ENCODE measurements at regions of chr3 and their contacts with region 1.

Region 1: DNA sequence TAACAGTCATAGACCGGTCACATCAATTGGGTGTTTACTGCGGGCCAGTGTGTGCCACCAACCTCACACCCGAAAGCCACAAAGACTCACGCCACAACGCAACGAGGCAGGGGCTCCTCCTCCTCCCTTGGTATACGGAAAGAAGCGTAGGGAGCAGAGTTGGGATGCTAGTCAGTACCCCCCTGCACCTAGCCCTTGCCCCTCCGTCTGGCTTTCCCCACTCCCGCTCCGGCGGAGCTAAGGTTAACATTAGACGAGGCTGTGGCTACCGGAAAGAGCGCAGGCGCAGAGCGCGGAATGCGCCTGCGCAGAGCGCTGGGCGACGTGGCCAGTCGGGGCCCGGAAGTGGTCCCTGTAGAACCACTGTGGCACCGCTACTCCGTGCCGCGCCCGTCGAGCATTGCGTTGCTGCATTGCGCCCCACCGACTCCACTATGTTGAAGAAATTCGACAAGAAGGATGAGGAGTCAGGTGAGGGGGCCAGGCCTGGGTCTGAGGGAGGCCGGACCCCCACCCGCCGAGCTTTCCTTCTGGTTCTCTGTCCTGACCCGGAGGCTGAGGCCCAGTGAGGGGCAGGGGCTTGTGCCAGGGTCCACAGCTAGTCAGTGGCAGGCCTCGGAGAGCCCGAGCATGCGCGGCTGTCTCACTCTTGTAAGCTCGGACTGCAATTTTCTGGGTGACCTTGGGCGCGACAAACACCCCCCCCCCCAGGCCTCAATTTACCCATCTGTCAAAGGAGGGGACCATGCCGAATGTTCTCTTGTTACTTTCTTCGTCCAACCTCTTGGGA is at the start of gene COPG1:
- DNase-seq: peak; percentile 88 to 94
- ATAC-seq: peak; percentile 90 to 95 (median 92)
- H3K4me3 ChIP-seq: peak within 1 kb of the TSS; percentile 80
- H3K27ac ChIP-seq: peak within 1 kb of the TSS; percentile 87
- H3K4me1 ChIP-seq: peaks cover 31% of the 10 kb centered on the region
- H3K27me3 ChIP-seq: no peaks in the 10 kb centered on the region
- CTCF ChIP-seq: no peak
- total RNA-seq, gene COPG1: 59.7 to 85.6 (median 65.4) TPM

Region 2: DNA sequence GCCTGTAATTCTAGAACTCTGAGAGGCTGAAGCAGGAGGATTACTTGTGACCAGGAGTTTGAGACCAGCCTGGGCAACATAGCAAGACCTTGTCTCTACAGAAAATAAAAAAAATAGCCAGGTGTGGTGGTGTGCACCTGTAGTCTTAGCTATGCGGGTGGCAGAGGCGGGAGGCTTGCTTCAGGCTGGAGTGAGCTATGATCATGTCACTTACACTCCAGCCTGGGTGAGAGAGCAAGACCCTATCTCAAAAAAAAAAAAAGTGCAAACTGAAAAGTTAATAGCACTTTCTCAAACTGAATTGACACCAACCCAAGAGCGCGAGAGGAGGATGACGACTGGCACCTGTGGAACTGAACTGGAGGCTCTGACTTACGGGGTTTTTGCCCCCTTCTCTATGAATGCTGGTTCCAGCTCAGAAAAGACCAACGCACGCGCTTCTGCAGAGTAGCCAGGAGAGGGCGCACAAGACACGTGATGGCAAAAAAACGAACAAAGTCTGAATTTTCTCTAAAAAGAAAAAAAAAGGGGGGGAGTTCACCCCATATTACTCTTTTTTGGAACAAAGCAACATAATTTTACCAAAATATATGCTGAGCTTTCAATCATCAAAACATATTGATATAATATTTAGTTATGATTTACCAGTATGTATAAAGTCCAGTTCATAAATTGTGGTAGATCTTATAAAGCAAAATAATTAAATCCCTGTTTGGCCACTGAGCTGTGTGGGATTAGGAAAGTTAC is 279.3 kb before region 1 on chr3:
- intact Hi-C with region 1: loop called (anchors 2 to 10 kb)
- DNase-seq: peak; percentile 30 to 71
- ATAC-seq: peak; percentile 53 to 79 (median 60)
- H3K4me3 ChIP-seq: no peak overlapping the region
- H3K27ac ChIP-seq: no peak overlapping the region
- H3K4me1 ChIP-seq: peaks cover 17% of the 10 kb centered on the region
- H3K27me3 ChIP-seq: no peaks in the 10 kb centered on the region
- CTCF ChIP-seq: peak; percentile 88

Region 3: DNA sequence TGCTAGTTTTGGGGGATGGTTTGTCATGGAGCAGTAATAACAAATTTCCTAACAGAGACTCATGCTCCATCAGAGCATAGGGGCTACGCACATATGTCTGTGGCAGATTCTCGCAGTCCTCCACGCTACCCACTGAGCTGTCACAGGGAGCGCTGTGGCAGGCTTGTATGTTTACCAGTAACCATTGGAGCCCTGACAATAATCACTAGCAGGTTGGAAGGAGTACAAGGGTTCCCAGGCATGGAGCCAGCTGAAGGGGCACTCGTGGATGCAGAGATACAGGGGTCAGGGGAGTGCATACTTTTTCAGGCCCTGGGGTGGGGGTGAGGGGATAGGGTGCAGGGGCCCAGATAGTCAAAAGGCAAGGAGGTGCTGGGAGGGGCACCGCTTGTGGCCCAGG is 196.8 kb before region 1 on chr3:
- intact Hi-C with region 1: loop called (anchors 1 to 10 kb)
- DNase-seq: no peak
- ATAC-seq: peak in 2 of 4 donors; percentile 25 to 29
- H3K4me3 ChIP-seq: no peak overlapping the region
- H3K27ac ChIP-seq: no peak overlapping the region
- H3K4me1 ChIP-seq: no peaks in the 10 kb centered on the region
- H3K27me3 ChIP-seq: no peaks in the 10 kb centered on the region
- CTCF ChIP-seq: no peak

Region 4: DNA sequence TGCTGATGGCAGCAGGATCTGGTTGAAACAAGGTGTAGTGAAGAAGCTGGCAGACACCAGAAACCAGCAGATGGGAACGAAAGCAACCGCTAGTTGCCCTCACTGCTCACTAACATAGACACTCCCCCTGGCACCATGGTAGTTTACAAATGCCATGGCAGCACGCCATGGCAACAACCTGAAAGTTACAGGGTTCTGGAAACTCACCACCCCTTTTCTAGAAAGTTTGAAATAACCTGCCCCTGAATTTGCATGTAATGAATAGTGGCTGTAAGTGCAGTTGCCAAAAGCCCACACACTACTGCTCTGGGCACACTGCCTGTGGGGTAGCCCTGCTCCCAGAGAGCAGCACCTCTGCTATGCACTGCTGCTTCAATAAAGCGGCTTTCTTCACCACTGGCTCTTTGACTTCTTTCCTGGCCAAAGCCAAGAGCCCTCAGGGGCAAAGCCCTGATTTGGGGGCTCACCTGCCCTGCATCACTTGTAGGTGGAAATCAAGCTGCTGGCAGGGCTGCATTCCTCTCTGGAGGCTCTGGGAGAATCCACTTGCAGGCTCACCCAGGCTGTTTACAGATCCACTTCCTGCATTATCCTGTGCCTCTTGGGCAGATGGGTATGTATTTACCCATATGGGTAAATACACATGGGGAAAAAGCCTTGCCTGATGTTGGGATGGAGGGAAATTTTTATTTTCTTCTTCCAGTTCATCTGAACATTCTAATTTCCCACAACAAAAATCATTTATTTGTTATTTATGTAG is 190.8 kb before region 1 on chr3:
- intact Hi-C with region 1: loop called (anchors 1 to 10 kb)
- DNase-seq: peak in 1 of 2 donors; percentile 8
- ATAC-seq: no peak
- H3K4me3 ChIP-seq: no peak overlapping the region
- H3K27ac ChIP-seq: no peak overlapping the region
- H3K4me1 ChIP-seq: no peaks in the 10 kb centered on the region
- H3K27me3 ChIP-seq: no peaks in the 10 kb centered on the region
- CTCF ChIP-seq: no peak

Region 5: GRCh38 chr3:129183569-129184395 is 65.7 kb before region 1 on chr3 and contains the start of gene CNBP:
- intact Hi-C with region 1: loop called (anchors 5 kb)
- DNase-seq: peak; percentile 96 to 97
- ATAC-seq: peak; percentile 84 to 95 (median 90)
- H3K4me3 ChIP-seq: peak within 1 kb of the TSS; percentile 97
- H3K27ac ChIP-seq: peak within 1 kb of the TSS; percentile 100
- H3K4me1 ChIP-seq: peaks cover 49% of the 10 kb centered on the region
- H3K27me3 ChIP-seq: no peaks in the 10 kb centered on the region
- CTCF ChIP-seq: no peak
- total RNA-seq, gene CNBP: 754 to 850 (median 816) TPM